MCF 10A (cell line): ENCODE measurements at regions of chr3 and their contacts with region 1.

Region 1: GRCh38 chr3:98022978-98023820 is 11.9 kb downstream of the GABRR3 start:
- DNase-seq: peak; percentile 82
- H3K4me3 Mint-ChIP-seq: no peak overlapping the region
- H3K27ac Mint-ChIP-seq: no peak overlapping the region
- H3K4me1 Mint-ChIP-seq: peaks cover 5% of the 10 kb centered on the region
- H3K27me3 Mint-ChIP-seq: no peaks in the 10 kb centered on the region
- CTCF ChIP-seq: peak; percentile 87

Region 2: GRCh38 chr3:97658668-97659285 is 364.4 kb before region 1 on chr3:
- CTCF ChIA-PET with region 1: interaction called, 3 read pairs
- POLR2A ChIA-PET with region 1: no interaction called
- intact Hi-C with region 1: loop called (anchors 5 kb)
- DNase-seq: peak; percentile 48
- H3K4me3 Mint-ChIP-seq: no peak overlapping the region
- H3K27ac Mint-ChIP-seq: no peak overlapping the region
- H3K4me1 Mint-ChIP-seq: no peaks in the 10 kb centered on the region
- H3K27me3 Mint-ChIP-seq: peaks cover 62% of the 10 kb centered on the region
- CTCF ChIP-seq: peak; percentile 70

Region 3: GRCh38 chr3:97793420-97794019 is 229.7 kb before region 1 on chr3:
- CTCF ChIA-PET with region 1: interaction called, 84 read pairs
- POLR2A ChIA-PET with region 1: interaction called, 5 read pairs
- intact Hi-C with region 1: loop called (anchors 1 kb)
- DNase-seq: peak; percentile 70
- H3K4me3 Mint-ChIP-seq: no peak overlapping the region
- H3K27ac Mint-ChIP-seq: no peak overlapping the region
- H3K4me1 Mint-ChIP-seq: no peaks in the 10 kb centered on the region
- H3K27me3 Mint-ChIP-seq: no peaks in the 10 kb centered on the region
- CTCF ChIP-seq: peak; percentile 65

Region 4: GRCh38 chr3:97821810-97822775 is 201.1 kb before region 1 on chr3 and contains the start of gene CRYBG3:
- CTCF ChIA-PET with region 1: interaction called, 15 read pairs
- POLR2A ChIA-PET with region 1: interaction called, 14 read pairs
- intact Hi-C with region 1: no loop called
- DNase-seq: peak; percentile 78
- H3K4me3 Mint-ChIP-seq: peak within 1 kb of the TSS; percentile 91
- H3K27ac Mint-ChIP-seq: peak within 1 kb of the TSS; percentile 81
- H3K4me1 Mint-ChIP-seq: peaks cover 22% of the 10 kb centered on the region
- H3K27me3 Mint-ChIP-seq: no peaks in the 10 kb centered on the region
- CTCF ChIP-seq: no peak
- total RNA-seq, gene CRYBG3: 7.2 and 10.7 TPM in 2 replicates

Region 5: DNA sequence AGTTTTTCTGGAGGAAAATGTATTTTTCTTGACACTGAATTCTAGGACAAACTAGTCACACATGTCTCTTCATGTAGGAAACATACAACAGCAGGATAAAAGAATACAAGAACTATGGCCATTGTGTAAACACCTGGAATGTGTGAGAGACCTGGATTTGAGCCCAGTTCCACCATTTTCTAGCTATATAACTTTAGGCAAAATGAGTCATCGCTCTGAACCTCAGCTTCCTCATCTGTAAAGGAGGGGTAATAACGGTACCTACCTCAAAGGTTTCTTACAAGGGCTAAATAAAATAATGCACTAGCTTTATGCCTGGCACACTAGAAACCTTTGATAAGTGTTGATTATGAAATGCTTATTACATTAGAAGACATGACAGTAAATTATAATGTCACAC is 108.8 kb before region 1 on chr3:
- CTCF ChIA-PET with region 1: interaction called, 10 read pairs
- POLR2A ChIA-PET with region 1: no interaction called
- intact Hi-C with region 1: no loop called
- DNase-seq: peak; percentile 94
- H3K4me3 Mint-ChIP-seq: no peak overlapping the region
- H3K27ac Mint-ChIP-seq: peak overlapping the region; percentile 39
- H3K4me1 Mint-ChIP-seq: peaks cover 20% of the 10 kb centered on the region
- H3K27me3 Mint-ChIP-seq: no peaks in the 10 kb centered on the region
- CTCF ChIP-seq: no peak

Region 6: DNA sequence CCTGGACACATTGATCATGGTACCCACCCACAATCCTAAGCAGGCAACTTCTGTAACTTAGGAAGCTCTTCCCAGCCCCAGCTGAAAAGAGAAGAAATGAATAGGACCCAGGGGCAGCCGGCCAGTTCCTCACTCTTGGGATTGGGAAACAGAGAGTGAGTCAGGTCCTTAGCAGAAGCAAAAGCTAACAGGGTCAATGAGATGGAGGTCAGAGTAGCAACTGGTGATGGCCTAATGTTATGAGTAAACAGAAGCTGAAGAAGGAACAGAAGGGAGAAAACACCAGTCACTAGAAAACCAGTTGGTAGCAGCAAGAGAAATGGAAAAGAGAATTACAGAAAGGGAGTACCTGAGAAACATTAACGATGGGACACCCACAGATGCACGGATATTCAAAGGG is 70.9 kb before region 1 on chr3:
- CTCF ChIA-PET with region 1: interaction called, 11 read pairs
- POLR2A ChIA-PET with region 1: no interaction called
- intact Hi-C with region 1: no loop called
- DNase-seq: peak; percentile 78
- H3K4me3 Mint-ChIP-seq: no peak overlapping the region
- H3K27ac Mint-ChIP-seq: no peak overlapping the region
- H3K4me1 Mint-ChIP-seq: peaks cover 12% of the 10 kb centered on the region
- H3K27me3 Mint-ChIP-seq: no peaks in the 10 kb centered on the region
- CTCF ChIP-seq: no peak

Region 7: GRCh38 chr3:98039322-98040024 is 16.3 kb after region 1 on chr3:
- CTCF ChIA-PET with region 1: interaction called, 22 read pairs
- POLR2A ChIA-PET with region 1: interaction called, 3 read pairs
- intact Hi-C with region 1: no loop called
- DNase-seq: peak; percentile 86
- H3K4me3 Mint-ChIP-seq: peak overlapping the region; percentile 59
- H3K27ac Mint-ChIP-seq: no peak overlapping the region
- H3K4me1 Mint-ChIP-seq: no peaks in the 10 kb centered on the region
- H3K27me3 Mint-ChIP-seq: peaks cover 70% of the 10 kb centered on the region
- CTCF ChIP-seq: peak; percentile 79